Calu3 (cell line): ENCODE measurements at regions of chr11 and their contacts with region 1.

Region 1: DNA sequence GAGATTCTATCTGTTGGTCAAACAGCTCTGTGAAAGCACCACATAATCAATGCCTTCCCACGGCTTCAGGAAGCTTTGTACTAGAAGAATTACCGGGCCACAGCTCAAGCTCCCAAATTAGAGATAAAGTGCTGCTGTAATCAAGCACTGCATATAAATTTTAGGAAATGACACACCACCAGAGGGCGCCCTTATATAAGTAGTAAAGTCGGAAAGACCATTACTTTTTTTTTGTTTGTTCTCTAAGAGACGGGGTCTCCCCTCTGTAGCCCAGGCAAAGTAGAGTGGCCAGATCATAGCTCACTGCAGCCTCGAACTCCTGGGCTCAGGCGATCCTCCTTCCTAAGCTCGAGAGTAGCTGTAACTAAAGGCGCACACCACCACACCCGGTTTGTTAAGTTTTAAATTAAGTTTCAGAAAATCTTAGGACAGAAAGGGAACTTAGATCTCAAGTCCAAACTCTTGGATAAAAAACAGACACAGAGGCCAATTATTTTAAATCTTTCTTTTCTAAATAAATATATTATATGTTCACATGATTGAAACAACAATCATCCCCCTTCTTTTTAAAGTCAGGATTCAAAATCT is 32.6 kb downstream of the PRCP start:
- DNase-seq: peak; percentile 69
- H3K4me3 Mint-ChIP-seq: no peak overlapping the region
- H3K27ac Mint-ChIP-seq: no peak overlapping the region
- H3K4me1 Mint-ChIP-seq: peaks cover 8% of the 10 kb centered on the region
- H3K27me3 Mint-ChIP-seq: no peaks in the 10 kb centered on the region
- CTCF ChIP-seq: peak; percentile 48

Region 2: DNA sequence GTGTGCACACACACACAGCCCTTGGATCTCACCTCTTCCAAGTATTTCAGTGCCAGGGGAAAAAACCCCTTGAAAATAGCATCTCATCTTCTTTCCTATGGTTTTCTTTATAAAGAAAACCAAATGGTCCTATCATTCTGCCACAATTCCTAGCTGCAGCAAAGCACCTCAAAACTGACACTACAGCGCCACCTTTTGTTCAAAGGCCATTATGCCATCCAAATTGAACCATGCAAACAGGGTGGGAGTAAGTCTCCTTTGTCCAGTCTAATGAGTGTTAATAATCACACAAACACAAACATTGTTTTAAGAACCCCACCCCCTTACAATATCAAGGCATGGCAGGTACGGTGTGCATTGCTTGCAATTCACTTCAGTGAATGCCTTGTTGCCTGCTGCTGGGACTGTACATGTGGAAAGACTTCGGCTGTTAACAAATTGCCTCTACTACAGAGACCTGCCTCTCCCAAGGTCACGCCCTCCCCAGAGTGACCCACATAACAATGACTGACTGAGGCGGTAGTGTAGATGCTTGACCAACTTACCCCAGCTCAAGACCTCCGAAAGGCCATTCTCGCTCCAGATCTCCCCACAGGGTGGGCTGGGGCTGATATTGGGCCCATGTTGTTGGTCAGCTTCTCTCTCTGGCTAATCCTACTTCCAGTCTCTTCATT is 165.6 kb before region 1 on chr11:
- CTCF ChIA-PET with region 1: no interaction called
- intact Hi-C with region 1: no loop called
- DNase-seq: peak; percentile 10
- H3K4me3 Mint-ChIP-seq: no peak overlapping the region
- H3K27ac Mint-ChIP-seq: no peak overlapping the region
- H3K4me1 Mint-ChIP-seq: no peaks in the 10 kb centered on the region
- H3K27me3 Mint-ChIP-seq: peaks cover 13% of the 10 kb centered on the region
- CTCF ChIP-seq: peak; percentile 25

Region 3: DNA sequence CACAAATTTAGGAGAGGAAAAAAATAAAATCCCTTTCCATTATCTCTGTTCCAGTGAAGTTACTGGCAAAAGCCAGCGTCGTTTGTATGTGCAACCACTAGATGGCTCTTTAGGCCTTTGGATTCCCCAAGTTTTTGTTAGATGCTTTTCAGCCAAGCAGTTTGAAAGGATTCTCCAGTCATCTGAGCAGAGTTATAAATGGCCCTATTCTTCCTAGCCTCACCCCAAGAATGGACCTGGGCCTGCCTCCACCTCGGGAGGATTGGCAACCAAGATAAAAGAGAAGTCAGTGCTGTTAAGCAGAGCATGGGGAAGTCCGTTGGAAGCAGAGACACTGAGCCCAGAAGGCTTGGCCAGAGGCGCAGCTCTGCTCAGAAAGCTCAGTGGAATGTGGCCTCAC is 149.3 kb before region 1 on chr11:
- CTCF ChIA-PET with region 1: interaction called, 3 read pairs
- intact Hi-C with region 1: loop called (anchors 1 kb)
- DNase-seq: peak; percentile 5
- H3K4me3 Mint-ChIP-seq: no peak overlapping the region
- H3K27ac Mint-ChIP-seq: no peak overlapping the region
- H3K4me1 Mint-ChIP-seq: no peaks in the 10 kb centered on the region
- H3K27me3 Mint-ChIP-seq: no peaks in the 10 kb centered on the region
- CTCF ChIP-seq: peak; percentile 28

Region 4: GRCh38 chr11:82775736-82776346 is 91.7 kb before region 1 on chr11:
- CTCF ChIA-PET with region 1: no interaction called
- intact Hi-C with region 1: loop called (anchors 1 kb)
- DNase-seq: peak; percentile 57
- H3K4me3 Mint-ChIP-seq: no peak overlapping the region
- H3K27ac Mint-ChIP-seq: no peak overlapping the region
- H3K4me1 Mint-ChIP-seq: no peaks in the 10 kb centered on the region
- H3K27me3 Mint-ChIP-seq: no peaks in the 10 kb centered on the region
- CTCF ChIP-seq: peak; percentile 44

Region 5: GRCh38 chr11:82900277-82901164 is 32.9 kb after region 1 on chr11 and contains the start of gene PRCP:
- CTCF ChIA-PET with region 1: interaction called, 12 read pairs
- intact Hi-C with region 1: loop called (anchors 1 kb)
- DNase-seq: peak; percentile 89
- H3K4me3 Mint-ChIP-seq: peak within 1 kb of the TSS; percentile 82
- H3K27ac Mint-ChIP-seq: peak within 1 kb of the TSS; percentile 73
- H3K4me1 Mint-ChIP-seq: peaks cover 23% of the 10 kb centered on the region
- H3K27me3 Mint-ChIP-seq: no peaks in the 10 kb centered on the region
- CTCF ChIP-seq: no peak
- total RNA-seq, gene PRCP: 22.0 and 22.7 TPM in 2 replicates

Region 6: GRCh38 chr11:82927254-82927880 is 59.8 kb after region 1 on chr11:
- CTCF ChIA-PET with region 1: interaction called, 5 read pairs
- intact Hi-C with region 1: loop called (anchors 1 kb)
- DNase-seq: peak; percentile 16
- H3K4me3 Mint-ChIP-seq: no peak overlapping the region
- H3K27ac Mint-ChIP-seq: no peak overlapping the region
- H3K4me1 Mint-ChIP-seq: no peaks in the 10 kb centered on the region
- H3K27me3 Mint-ChIP-seq: no peaks in the 10 kb centered on the region
- CTCF ChIP-seq: peak; percentile 31

Region 7: DNA sequence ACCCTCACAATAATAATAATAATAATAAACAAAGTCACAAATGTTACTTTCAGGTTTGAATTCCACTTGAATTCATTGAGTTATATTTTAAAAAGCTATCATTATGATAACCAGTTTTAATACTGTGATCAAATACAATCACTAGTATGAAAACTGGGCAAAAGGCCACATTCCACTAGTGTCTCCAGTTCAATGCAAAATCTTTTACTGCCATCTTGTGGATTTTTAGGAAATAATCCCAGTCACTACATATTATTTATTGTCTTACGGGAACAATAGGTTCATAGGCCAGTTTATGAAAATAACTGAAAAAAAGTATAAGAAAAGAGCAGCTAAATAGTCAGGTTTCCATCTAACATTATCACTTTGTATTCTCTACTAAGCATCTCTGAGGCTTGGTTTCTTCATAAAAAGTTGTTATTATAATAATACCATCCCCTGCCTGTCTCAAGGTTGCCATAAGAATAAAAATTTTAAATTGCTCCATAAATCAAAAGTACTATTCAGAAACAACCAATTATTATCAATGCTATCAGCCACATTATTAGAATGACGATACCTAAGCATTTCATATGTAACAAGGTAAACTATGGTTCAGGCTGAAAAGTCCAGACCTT is 952.5 kb after region 1 on chr11:
- CTCF ChIA-PET with region 1: no interaction called
- intact Hi-C with region 1: loop called (anchors 1 kb)
- DNase-seq: no peak
- H3K4me3 Mint-ChIP-seq: no peak overlapping the region
- H3K27ac Mint-ChIP-seq: no peak overlapping the region
- H3K4me1 Mint-ChIP-seq: no peaks in the 10 kb centered on the region
- H3K27me3 Mint-ChIP-seq: peaks cover 30% of the 10 kb centered on the region
- CTCF ChIP-seq: peak; percentile 34